ENCODE measurements at regions of chrX and their contacts with region 1.

Region 1: DNA sequence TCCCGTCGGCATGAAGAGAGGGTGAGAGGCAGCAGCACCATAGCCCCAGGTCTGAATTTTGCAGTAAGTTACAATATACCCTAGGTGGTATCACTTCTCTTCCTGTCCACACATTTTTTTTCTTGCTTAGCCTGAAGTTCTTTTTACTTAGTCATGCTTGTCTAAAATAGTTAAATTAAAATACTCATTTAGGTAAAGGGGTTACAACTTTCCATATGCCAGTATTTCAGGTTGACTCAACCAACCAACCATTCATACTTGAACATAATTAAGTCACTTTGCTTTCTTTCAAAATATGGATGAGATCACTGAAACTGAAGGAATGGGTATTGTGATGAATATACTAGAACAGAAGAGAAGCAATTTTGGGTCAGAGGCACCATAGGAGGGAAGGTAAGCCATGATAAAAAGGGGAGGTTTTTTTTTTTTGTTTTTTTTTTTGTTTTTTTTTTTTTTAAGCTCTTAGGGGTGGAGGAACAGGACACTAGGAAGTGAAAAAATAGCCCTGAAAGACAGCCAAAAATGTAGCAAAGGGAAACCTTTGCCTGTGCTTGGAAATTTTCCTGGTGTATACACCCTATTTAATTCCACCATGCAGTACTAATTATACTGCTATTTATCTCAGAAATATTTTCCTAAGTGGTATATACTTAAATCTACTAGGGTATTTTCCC is 41.8 kb downstream of the RPS6KA3 start:
- DNase-seq: peak; percentile 16
- ATAC-seq: peak; percentile 96
- H3K4me3 Mint-ChIP-seq: no peak overlapping the region
- H3K27ac Mint-ChIP-seq: peak overlapping the region; percentile 55
- H3K4me1 Mint-ChIP-seq: peaks cover 42% of the 10 kb centered on the region
- H3K27me3 Mint-ChIP-seq: no peaks in the 10 kb centered on the region

Region 2: DNA sequence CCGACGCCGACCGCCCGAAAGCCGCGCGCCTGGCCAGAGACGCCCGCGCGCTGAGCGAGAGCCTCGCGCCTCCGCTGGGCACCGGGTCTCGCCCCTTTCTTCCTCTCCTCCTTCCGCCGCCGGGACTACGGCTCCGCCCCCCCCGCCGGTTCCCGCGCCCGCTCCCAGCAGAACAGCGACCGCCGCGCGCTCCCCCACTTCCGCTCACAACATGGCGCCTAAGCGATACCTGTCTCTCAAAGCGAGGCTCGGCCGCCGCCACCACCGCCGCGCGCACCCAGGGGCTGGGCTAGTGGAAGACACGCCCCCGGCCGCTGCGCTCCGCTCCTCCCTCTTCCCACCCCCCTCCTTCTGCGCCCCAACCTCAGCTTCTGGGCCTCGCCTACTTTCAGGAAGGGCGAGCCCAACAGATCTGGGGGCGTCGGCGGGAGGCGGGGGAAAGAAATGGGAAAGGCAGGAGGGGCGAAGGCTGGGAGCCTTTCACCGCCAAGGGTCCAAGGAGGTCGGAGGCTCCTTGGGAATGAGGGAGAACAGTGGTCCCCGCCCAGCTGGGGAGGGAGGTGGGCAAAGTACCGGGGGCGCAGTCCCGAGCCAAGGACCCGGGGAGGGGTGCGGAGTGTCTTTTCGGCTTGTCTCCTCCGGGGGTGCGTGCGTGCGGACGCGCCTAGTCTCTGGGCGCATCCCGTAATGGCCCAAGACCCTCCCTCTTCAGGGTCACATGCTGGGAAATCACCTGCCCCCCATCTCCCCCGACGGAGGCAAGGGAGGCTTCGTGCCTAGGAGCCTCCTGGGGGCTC is 42.1 kb after region 1 on chrX and contains the start of gene RPS6KA3:
- CTCF ChIA-PET with region 1: no interaction called
- POLR2A ChIA-PET with region 1: no interaction called
- intact Hi-C with region 1: loop called (anchors 1 to 2 kb)
- DNase-seq: peak; percentile 94
- ATAC-seq: peak; percentile 83
- H3K4me3 Mint-ChIP-seq: peak within 1 kb of the TSS; percentile 82
- H3K27ac Mint-ChIP-seq: peak within 1 kb of the TSS; percentile 91
- H3K4me1 Mint-ChIP-seq: peaks cover 18% of the 10 kb centered on the region
- H3K27me3 Mint-ChIP-seq: no peaks in the 10 kb centered on the region
- total RNA-seq, gene RPS6KA3: 40.7 to 41.5 TPM

Region 3: GRCh38 chrX:20477836-20478524 is 253.0 kb after region 1 on chrX:
- CTCF ChIA-PET with region 1: no interaction called
- POLR2A ChIA-PET with region 1: no interaction called
- intact Hi-C with region 1: no loop called
- DNase-seq: no peak
- ATAC-seq: no peak
- H3K4me3 Mint-ChIP-seq: no peak overlapping the region
- H3K27ac Mint-ChIP-seq: no peak overlapping the region
- H3K4me1 Mint-ChIP-seq: no peaks in the 10 kb centered on the region
- H3K27me3 Mint-ChIP-seq: no peaks in the 10 kb centered on the region

Region 4: DNA sequence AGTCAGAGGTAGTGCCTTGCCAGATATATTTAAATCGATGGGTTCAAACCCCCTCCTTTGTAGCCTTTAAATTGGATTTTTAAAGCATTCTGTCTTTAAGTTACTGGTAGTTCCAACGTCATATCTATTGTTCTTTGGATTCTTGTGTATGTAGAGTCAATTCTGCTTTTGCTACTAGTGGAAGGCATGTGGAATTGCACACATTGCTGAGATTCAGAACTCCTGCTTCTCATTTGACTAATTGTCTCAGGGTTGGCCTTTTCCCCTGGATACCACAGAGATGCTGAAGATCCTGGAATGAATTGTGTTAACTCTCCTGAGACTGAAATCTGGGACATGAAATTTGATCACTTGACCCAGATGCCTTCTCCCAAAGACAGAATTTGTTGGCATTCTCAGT is 370.0 kb after region 1 on chrX:
- CTCF ChIA-PET with region 1: no interaction called
- POLR2A ChIA-PET with region 1: no interaction called
- intact Hi-C with region 1: loop called in 1 of 2 experiments (anchors 5 kb)
- DNase-seq: no peak
- ATAC-seq: no peak
- H3K4me3 Mint-ChIP-seq: no peak overlapping the region
- H3K27ac Mint-ChIP-seq: no peak overlapping the region
- H3K4me1 Mint-ChIP-seq: peaks cover 23% of the 10 kb centered on the region
- H3K27me3 Mint-ChIP-seq: peaks cover 6% of the 10 kb centered on the region

Measured in activated CD4-positive, alpha-beta T cell treated with anti-CD3 and anti-CD28 coated beads for 36 hours (primary cell).